ENCODE measurements at regions of chr9 and their contacts with region 1.

Region 1: GRCh38 chr9:98010445-98010844 is 27.3 kb downstream of the ANP32B start:
- DNase-seq: peak in 2 of 4 experiments; percentile 26 to 38
- ATAC-seq: peak; percentile 53
- H3K4me3 ChIP-seq: no peak overlapping the region
- H3K27ac ChIP-seq: no peak overlapping the region
- H3K4me1 ChIP-seq: no peaks in the 10 kb centered on the region
- H3K27me3 ChIP-seq: no peaks in the 10 kb centered on the region
- CTCF ChIP-seq: no peak
- EP300 ChIP-seq: no peak
- POLR2A ChIP-seq: peak; percentile 51
- RAD21 ChIP-seq: no peak

Region 2: GRCh38 chr9:97564291-97565175 is 445.9 kb before region 1 on chr9:
- CTCF ChIA-PET with region 1: no interaction called
- POLR2A ChIA-PET with region 1: no interaction called
- in situ Hi-C with region 1: no loop called
- intact Hi-C with region 1: no loop called
- DNase-seq: peak in 1 of 4 experiments; percentile 11
- ATAC-seq: no peak
- H3K4me3 ChIP-seq: no peak overlapping the region
- H3K27ac ChIP-seq: no peak overlapping the region
- H3K4me1 ChIP-seq: peaks cover 4 to 15% of the 10 kb centered on the region in 2 experiments; a peak in 3 of 5 replicates
- H3K27me3 ChIP-seq: no peaks in the 10 kb centered on the region
- CTCF ChIP-seq: no peak
- EP300 ChIP-seq: no peak
- POLR2A ChIP-seq: no peak
- RAD21 ChIP-seq: no peak

Region 3: GRCh38 chr9:97966493-97966892 is 44.0 kb before region 1 on chr9:
- CTCF ChIA-PET with region 1: no interaction called
- POLR2A ChIA-PET with region 1: no interaction called
- in situ Hi-C with region 1: no loop called
- intact Hi-C with region 1: no loop called
- DNase-seq: peak in 1 of 4 experiments; percentile 30
- ATAC-seq: peak; percentile 33
- H3K4me3 ChIP-seq: no peak overlapping the region
- H3K27ac ChIP-seq: no peak overlapping the region
- H3K4me1 ChIP-seq: peaks cover 16 to 39% of the 10 kb centered on the region in 2 experiments
- H3K27me3 ChIP-seq: no peaks in the 10 kb centered on the region
- CTCF ChIP-seq: no peak
- EP300 ChIP-seq: no peak
- POLR2A ChIP-seq: no peak
- RAD21 ChIP-seq: no peak

Region 4: GRCh38 chr9:97997330-97998276 is 12.8 kb before region 1 on chr9:
- CTCF ChIA-PET with region 1: interaction called, 5 read pairs
- POLR2A ChIA-PET with region 1: interaction called, 23 read pairs
- in situ Hi-C with region 1: no loop called
- intact Hi-C with region 1: no loop called
- DNase-seq: no peak
- ATAC-seq: no peak; the same call in 2 of the 3 replicates
- H3K4me3 ChIP-seq: no peak overlapping the region
- H3K27ac ChIP-seq: peak overlapping the region; percentile 4; the same call in 1 of the 3 replicates
- H3K4me1 ChIP-seq: peaks cover 0 to 8% of the 10 kb centered on the region in 2 experiments; a peak in 3 of 5 replicates
- H3K27me3 ChIP-seq: no peaks in the 10 kb centered on the region
- CTCF ChIP-seq: no peak
- EP300 ChIP-seq: no peak
- POLR2A ChIP-seq: peak; percentile 54
- RAD21 ChIP-seq: no peak

Region 5: GRCh38 chr9:98021306-98022040 is 11.0 kb after region 1 on chr9:
- CTCF ChIA-PET with region 1: no interaction called
- POLR2A ChIA-PET with region 1: interaction called, 12 read pairs
- in situ Hi-C with region 1: no loop called
- intact Hi-C with region 1: no loop called
- DNase-seq: no peak
- ATAC-seq: no peak
- H3K4me3 ChIP-seq: no peak overlapping the region
- H3K27ac ChIP-seq: no peak overlapping the region
- H3K4me1 ChIP-seq: no peaks in the 10 kb centered on the region
- H3K27me3 ChIP-seq: no peaks in the 10 kb centered on the region
- CTCF ChIP-seq: no peak
- EP300 ChIP-seq: no peak
- POLR2A ChIP-seq: no peak
- RAD21 ChIP-seq: no peak